ENCODE measurements at regions of chr16 and their contacts with region 1.

Region 1: GRCh38 chr16:22297114-22297878 is at the start of gene POLR3E:
- DNase-seq: peak; percentile 100
- ATAC-seq: peak; percentile 99
- H3K4me3 ChIP-seq: peak within 1 kb of the TSS; percentile 96
- H3K27ac ChIP-seq: peak within 1 kb of the TSS; percentile 89
- H3K4me1 ChIP-seq: peaks cover 8% of the 10 kb centered on the region
- H3K27me3 ChIP-seq: no peaks in the 10 kb centered on the region
- CTCF ChIP-seq: peak; percentile 90
- total RNA-seq, gene POLR3E: 43.3 TPM

Region 2: DNA sequence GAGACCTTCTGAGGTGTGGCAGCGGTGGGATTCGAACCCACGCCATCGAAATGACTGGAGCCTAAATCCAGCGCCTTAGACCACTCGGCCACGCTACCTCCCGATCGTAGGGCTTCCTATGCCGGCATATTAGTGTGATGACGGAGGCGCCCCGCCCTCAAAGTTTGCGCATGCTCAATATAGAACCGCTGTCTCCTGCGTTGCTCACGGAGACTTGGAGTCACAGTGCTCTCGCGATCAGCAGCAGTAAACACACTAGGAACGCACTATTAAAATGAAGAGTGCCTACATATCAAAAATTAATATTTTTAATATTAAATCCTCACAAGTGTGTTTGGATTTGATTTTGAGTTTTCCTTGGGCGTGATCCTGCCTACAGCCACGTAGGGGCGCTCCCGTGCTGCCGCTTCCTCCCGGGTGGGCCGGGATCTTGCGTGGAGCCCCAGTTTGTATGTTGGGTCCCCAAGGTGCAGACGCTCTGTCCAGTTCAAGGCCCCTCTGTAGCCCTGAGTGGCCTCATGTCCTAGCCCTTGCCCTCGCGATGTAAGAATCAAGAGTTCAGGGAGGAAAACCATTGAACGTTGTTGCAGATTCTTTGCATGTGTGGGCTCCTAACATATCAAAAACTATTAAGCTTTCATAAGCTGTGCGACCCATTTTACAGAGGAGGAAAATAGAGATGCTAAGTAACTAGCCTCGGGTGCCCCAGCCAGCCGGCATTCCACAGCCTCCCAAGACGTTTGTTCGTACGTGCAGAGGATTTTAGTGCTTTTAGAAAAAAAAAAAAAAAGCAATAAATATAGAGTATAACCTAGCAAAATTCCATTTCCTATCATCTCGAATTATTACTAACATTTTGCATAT is 101.4 kb before region 1 on chr16:
- intact Hi-C with region 1: loop called (anchors 5 kb)
- DNase-seq: peak; percentile 92
- ATAC-seq: peak; percentile 43
- H3K4me3 ChIP-seq: peak overlapping the region; percentile 59
- H3K27ac ChIP-seq: peak overlapping the region; percentile 71
- H3K4me1 ChIP-seq: peaks cover 30% of the 10 kb centered on the region
- H3K27me3 ChIP-seq: no peaks in the 10 kb centered on the region
- CTCF ChIP-seq: peak; percentile 93